ENCODE measurements at regions of chr4 and their contacts with region 1.

Region 1: DNA sequence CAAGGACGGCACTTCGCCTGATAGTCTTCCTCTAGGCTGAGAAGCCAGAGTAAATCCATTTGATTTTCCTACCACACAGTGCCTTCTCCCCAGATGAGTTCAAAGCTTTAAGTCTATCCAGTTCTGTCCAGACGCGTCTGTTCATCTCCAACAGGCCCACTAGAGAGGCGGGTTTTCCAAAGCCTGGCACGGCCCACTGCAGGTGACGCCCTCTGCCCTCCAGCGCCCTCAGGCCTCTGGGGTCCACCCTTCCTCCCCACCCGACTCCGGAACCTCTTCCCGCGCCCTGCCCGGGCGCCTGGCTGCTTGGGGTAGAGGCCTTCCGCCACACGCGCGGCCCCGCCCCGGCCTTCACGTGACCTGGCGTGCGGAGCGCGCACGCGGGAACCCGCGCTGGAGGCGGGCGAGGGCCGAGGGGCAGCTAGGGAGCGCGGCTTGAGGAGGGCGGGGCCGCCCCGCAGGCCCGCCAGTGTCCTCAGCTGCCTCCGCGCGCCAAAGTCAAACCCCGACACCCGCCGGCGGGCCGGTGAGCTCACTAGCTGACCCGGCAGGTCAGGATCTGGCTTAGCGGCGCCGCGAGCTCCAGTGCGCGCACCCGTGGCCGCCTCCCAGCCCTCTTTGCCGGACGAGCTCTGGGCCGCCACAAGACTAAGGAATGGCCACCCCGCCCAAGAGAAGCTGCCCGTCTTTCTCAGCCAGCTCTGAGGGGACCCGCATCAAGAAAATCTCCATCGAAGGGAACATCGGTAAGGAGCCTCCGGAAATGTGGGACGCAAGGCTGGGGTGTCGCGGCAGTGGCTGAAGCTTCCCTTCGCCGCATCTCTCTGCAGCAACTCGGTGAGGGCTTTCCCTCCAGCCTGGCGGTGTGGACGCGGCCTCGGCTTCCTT is at the start of gene DCK:
- DNase-seq: peak; percentile 64 to 89
- H3K4me3 ChIP-seq: peak within 1 kb of the TSS; percentile 81
- H3K27ac ChIP-seq: peak within 1 kb of the TSS; percentile 59
- H3K4me1 ChIP-seq: peaks cover 10% of the 10 kb centered on the region; the same call in 1 of the 2 replicates
- H3K27me3 ChIP-seq: no peaks in the 10 kb centered on the region
- CTCF ChIP-seq: no peak
- total RNA-seq, gene DCK: 10.1 and 11.8 TPM in 2 replicates

Region 2: DNA sequence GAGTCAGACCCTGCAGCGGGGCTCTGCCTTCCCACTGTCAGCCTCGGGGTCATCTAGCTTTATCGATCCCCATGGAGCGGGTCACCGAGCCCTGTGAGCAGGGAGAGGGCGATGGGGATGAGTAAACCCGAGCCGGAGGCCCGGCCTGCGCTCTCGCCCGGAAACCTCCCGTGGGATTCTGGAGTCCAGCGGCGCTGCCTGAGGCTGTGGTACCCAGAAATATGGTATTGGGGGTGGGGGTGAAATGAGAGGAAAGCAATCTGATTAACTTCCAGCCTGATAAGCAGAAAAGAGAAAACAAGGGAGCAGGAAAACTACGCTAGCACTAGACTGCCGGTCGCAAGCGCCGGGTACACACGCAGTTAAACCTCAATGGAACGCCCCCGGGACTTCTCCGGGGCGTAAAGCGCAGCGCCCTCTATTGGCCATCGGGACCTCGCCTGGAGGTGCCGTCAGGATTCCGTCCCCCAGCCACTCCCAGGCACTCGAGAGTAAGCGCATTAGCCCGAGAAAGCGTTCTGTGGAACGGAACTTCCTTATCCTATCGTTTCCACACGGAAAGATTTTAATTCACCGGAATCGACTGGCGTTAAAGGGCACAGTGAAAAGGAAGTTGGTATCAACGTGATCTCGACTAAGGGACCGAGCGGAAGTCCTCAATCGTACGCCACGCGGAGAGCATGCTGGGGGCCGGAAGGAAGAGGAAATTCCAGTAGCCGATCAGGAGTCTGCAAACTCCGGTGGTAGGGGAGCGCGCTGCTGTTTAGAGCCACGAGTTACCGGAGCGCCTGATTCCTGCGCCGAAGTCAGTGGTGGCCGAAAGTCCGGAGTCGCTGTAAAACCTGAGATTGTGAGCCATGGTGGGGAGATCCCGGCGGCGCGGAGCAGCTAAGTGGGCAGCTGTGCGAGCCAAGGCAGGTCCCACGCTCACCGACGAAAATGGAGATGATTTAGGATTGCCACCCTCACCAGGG is 305.3 kb before region 1 on chr4 and contains the start of gene UTP3:
- CTCF ChIA-PET with region 1: no interaction called
- POLR2A ChIA-PET with region 1: no interaction called
- intact Hi-C with region 1: loop called (anchors 10 kb)
- DNase-seq: peak; percentile 92 to 95
- H3K4me3 ChIP-seq: peak within 1 kb of the TSS; percentile 98
- H3K27ac ChIP-seq: peak within 1 kb of the TSS; percentile 76
- H3K4me1 ChIP-seq: peaks cover 22% of the 10 kb centered on the region
- H3K27me3 ChIP-seq: no peaks in the 10 kb centered on the region
- CTCF ChIP-seq: peak; percentile 75
- total RNA-seq, gene UTP3: 15.1 and 16.4 TPM in 2 replicates

Region 3: DNA sequence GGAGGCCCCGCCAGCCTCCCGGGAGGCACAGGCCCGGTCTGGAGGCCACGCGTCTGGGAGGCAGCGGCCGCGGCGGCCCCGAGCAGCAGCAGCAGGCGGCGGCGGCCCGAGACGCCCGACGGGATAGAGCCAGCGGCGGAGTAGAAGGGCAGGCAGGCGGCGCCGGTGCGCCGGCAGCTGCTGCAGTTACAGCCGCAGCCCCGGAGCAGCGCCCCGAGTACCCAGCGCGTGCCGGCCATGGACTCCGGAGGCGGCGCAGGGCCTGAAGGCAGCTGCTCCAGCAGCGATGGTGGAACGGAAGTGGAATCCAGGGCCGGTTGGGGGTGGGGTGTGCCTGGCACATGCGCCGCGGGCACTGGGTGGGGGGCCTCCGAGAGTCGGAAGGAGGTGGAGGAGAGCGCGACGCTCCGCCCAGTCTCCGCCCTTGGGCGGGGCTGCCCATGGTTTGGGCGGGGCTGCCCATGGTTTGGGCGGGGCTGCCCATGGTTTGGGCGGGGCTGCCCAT is 153.8 kb before region 1 on chr4 and contains the start of gene GRSF1:
- CTCF ChIA-PET with region 1: interaction called, 4 read pairs
- POLR2A ChIA-PET with region 1: no interaction called
- intact Hi-C with region 1: loop called (anchors 5 kb)
- DNase-seq: peak; percentile 58 to 86
- H3K4me3 ChIP-seq: peak within 1 kb of the TSS; percentile 80
- H3K27ac ChIP-seq: peak within 1 kb of the TSS; percentile 54
- H3K4me1 ChIP-seq: peaks cover 6% of the 10 kb centered on the region
- H3K27me3 ChIP-seq: no peaks in the 10 kb centered on the region
- CTCF ChIP-seq: no peak
- total RNA-seq, gene GRSF1: 52.4 and 70.0 TPM in 2 replicates

Region 4: GRCh38 chr4:70915036-70915815 is 78.2 kb before region 1 on chr4:
- CTCF ChIA-PET with region 1: no interaction called
- POLR2A ChIA-PET with region 1: no interaction called
- intact Hi-C with region 1: loop called (anchors 5 kb)
- DNase-seq: peak in 1 of 2 experiments; percentile 10
- H3K4me3 ChIP-seq: no peak overlapping the region
- H3K27ac ChIP-seq: no peak overlapping the region
- H3K4me1 ChIP-seq: no peaks in the 10 kb centered on the region
- H3K27me3 ChIP-seq: no peaks in the 10 kb centered on the region
- CTCF ChIP-seq: no peak

Region 5: DNA sequence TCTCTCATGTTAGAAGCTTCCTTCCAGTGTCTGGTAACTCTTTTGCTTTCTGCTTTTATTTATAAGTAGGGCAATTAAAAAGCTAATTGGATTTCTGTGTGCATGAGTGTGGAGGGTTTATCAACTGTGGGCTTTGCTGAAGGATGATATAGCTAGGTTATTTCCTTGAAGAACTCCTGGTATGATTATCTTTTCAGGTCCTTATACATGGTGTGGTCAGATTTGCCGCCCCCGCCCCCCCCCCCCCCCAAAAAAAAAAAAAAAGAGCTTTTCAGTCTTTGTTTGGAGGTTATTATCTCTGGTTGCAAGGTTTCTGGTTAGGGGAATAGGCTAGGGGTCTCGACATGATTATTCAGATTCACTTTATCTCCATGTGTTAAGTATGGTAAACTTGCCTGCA is 55.3 kb before region 1 on chr4:
- CTCF ChIA-PET with region 1: no interaction called
- POLR2A ChIA-PET with region 1: interaction called, 11 read pairs
- intact Hi-C with region 1: no loop called
- DNase-seq: no peak
- H3K4me3 ChIP-seq: no peak overlapping the region
- H3K27ac ChIP-seq: no peak overlapping the region
- H3K4me1 ChIP-seq: no peaks in the 10 kb centered on the region
- H3K27me3 ChIP-seq: no peaks in the 10 kb centered on the region
- CTCF ChIP-seq: no peak

Region 6: DNA sequence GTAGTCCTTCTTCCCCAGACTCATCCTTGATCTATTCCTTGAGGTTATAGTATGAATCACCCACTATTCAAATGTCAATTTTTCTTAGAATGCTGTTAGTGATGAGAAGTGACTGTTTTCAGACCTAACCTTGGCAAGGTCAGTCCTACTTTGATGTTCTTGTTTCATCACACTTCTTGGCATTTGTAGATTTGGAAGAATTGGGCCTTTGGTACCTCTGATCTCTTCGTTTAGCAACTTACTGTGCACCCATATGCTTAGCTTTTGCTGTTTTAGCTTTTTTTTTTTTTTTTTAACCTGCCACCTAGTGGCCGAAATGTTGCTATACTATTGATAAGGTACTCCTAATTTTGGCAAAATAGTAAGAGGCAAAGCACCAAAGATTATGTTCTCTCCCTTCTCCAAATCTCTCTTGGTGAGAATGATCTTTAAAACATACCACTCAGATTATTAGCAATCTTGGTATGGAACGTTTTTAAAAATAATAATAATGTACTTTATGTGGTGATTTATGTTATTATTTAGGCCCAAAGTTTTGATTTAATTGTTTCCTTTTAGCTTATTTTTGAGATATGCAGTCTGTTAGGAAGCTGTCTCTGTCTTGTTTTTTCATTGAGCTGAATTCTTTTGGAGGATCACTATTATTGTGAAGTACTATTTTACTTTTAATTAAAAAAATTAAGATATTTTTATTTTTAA is 16.6 kb after region 1 on chr4:
- CTCF ChIA-PET with region 1: interaction called, 16 read pairs
- POLR2A ChIA-PET with region 1: no interaction called
- intact Hi-C with region 1: no loop called
- DNase-seq: peak in 1 of 2 experiments; percentile 39
- H3K4me3 ChIP-seq: no peak overlapping the region
- H3K27ac ChIP-seq: no peak overlapping the region
- H3K4me1 ChIP-seq: no peaks in the 10 kb centered on the region
- H3K27me3 ChIP-seq: no peaks in the 10 kb centered on the region
- CTCF ChIP-seq: peak; percentile 80

Region 7: GRCh38 chr4:71659979-71660378 is 666.6 kb after region 1 on chr4:
- CTCF ChIA-PET with region 1: no interaction called
- POLR2A ChIA-PET with region 1: no interaction called
- intact Hi-C with region 1: no loop called
- DNase-seq: no peak
- H3K4me3 ChIP-seq: no peak overlapping the region
- H3K27ac ChIP-seq: no peak overlapping the region
- H3K4me1 ChIP-seq: no peaks in the 10 kb centered on the region
- H3K27me3 ChIP-seq: no peaks in the 10 kb centered on the region
- CTCF ChIP-seq: no peak

Measured in PC-9 (cell line).